Left colon (tissue), 2 donors: ENCODE measurements at regions of chr5 and their contacts with region 1.

Region 1: DNA sequence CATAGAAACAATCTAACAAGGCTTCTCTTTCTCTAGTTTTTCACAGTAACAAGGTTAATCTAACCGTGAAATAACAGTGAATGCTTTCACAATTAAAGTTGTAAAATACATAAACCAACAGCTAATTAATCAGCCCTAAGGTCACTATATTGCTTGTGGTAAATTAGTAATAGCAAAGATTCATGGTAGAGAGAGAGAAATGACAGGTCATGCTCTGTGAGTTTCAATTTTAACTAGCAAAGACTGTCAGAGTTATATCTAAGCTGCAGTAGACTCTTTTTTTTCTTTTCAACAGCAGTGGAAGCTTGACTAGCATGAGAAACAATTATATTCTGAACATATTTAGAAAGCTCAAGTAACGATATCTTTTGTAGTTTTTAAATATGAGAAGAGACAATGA is 1068.0 kb downstream of the MAT2B start:
- DNase-seq: no peak
- ATAC-seq: no peak

Region 2: DNA sequence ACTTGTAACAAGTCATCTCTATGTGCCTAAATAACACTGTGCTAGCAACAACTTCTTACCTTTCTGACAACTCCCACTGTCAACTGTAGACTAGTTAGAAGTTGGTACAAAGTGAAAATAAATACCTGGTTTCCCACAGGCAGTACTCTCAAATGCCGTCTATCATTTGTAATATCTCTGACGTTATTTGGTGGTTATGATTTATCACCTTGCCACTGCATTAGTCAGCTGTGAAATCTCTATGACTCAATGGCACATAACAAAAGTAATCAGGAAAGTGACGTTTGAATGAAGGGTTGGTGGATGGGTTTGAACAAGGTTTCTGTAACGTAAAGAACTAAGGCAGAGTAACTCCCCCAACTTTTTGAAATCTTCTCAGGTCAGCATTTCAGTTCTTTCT is 475.6 kb before region 1 on chr5:
- intact Hi-C with region 1: no loop called
- DNase-seq: no peak
- ATAC-seq: no peak

Region 3: DNA sequence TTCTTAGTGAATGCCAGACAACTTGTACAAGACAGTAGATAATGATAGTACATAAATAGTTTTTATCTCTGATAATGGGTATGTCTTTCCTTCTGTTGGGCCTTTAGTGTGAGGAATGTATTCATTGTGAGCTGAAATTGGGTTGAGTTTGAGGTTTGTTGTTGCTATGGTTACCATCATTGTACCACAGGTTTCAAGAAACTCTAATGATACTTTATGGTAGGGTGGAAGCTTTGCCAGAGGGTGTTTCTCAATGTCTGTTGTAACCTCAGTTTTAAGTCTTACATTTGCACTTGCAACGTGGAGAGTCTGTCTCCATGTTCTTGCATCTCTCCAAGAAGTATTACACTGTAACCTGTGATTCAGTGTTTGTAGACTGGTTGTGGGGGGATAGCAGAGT is 482.1 kb after region 1 on chr5:
- intact Hi-C with region 1: loop called in 1 of 2 experiments (anchors 10 kb)
- DNase-seq: no peak
- ATAC-seq: no peak